ENCODE measurements at regions of chr12 and their contacts with region 1.

Region 1: GRCh38 chr12:51217968-51218606 is at the start of gene POU6F1:
- DNase-seq: peak; percentile 72
- H3K4me3 Mint-ChIP-seq: peak within 1 kb of the TSS; percentile 79
- H3K27ac Mint-ChIP-seq: peak within 1 kb of the TSS; percentile 65
- H3K4me1 Mint-ChIP-seq: peaks cover 16% of the 10 kb centered on the region
- H3K27me3 Mint-ChIP-seq: no peaks in the 10 kb centered on the region
- total RNA-seq, gene POU6F1: 4.1 to 4.8 TPM

Region 2: GRCh38 chr12:51047655-51048540 is 170.2 kb before region 1 on chr12 and contains the start of gene LETMD1:
- CTCF ChIA-PET with region 1: interaction called, 4 read pairs
- POLR2A ChIA-PET with region 1: interaction called, 13 read pairs
- DNase-seq: peak; percentile 93
- H3K4me3 Mint-ChIP-seq: peak within 1 kb of the TSS; percentile 94
- H3K27ac Mint-ChIP-seq: peak within 1 kb of the TSS; percentile 92
- H3K4me1 Mint-ChIP-seq: peaks cover 37% of the 10 kb centered on the region
- H3K27me3 Mint-ChIP-seq: no peaks in the 10 kb centered on the region
- total RNA-seq, gene LETMD1: 92.1 to 93.9 TPM

Region 3: GRCh38 chr12:51083126-51083833 is 134.8 kb before region 1 on chr12 and contains the start of gene CSRNP2:
- CTCF ChIA-PET with region 1: interaction called, 5 read pairs
- POLR2A ChIA-PET with region 1: interaction called, 13 read pairs
- DNase-seq: peak; percentile 96
- H3K4me3 Mint-ChIP-seq: peak within 1 kb of the TSS; percentile 92
- H3K27ac Mint-ChIP-seq: peak within 1 kb of the TSS; percentile 71
- H3K4me1 Mint-ChIP-seq: peaks cover 42% of the 10 kb centered on the region
- H3K27me3 Mint-ChIP-seq: no peaks in the 10 kb centered on the region
- total RNA-seq, gene CSRNP2: 14.7 to 16.3 TPM

Region 4: GRCh38 chr12:51192284-51192671 is 25.8 kb before region 1 on chr12:
- CTCF ChIA-PET with region 1: no interaction called
- POLR2A ChIA-PET with region 1: no interaction called
- DNase-seq: no peak
- H3K4me3 Mint-ChIP-seq: no peak overlapping the region
- H3K27ac Mint-ChIP-seq: no peak overlapping the region
- H3K4me1 Mint-ChIP-seq: no peaks in the 10 kb centered on the region
- H3K27me3 Mint-ChIP-seq: no peaks in the 10 kb centered on the region

Region 5: GRCh38 chr12:51229116-51229809 is 11.2 kb after region 1 on chr12:
- CTCF ChIA-PET with region 1: interaction called, 18 read pairs
- POLR2A ChIA-PET with region 1: interaction called, 6 read pairs
- DNase-seq: no peak
- H3K4me3 Mint-ChIP-seq: no peak overlapping the region
- H3K27ac Mint-ChIP-seq: no peak overlapping the region
- H3K4me1 Mint-ChIP-seq: no peaks in the 10 kb centered on the region
- H3K27me3 Mint-ChIP-seq: peaks cover 2% of the 10 kb centered on the region

Region 6: GRCh38 chr12:51238510-51239334 is 20.6 kb after region 1 on chr12 and contains the start of gene DAZAP2:
- CTCF ChIA-PET with region 1: interaction called, 17 read pairs
- POLR2A ChIA-PET with region 1: interaction called, 68 read pairs
- DNase-seq: peak; percentile 97
- H3K4me3 Mint-ChIP-seq: peak within 1 kb of the TSS; percentile 93
- H3K27ac Mint-ChIP-seq: peak within 1 kb of the TSS; percentile 98
- H3K4me1 Mint-ChIP-seq: peaks cover 39% of the 10 kb centered on the region
- H3K27me3 Mint-ChIP-seq: peaks cover 4% of the 10 kb centered on the region
- total RNA-seq, gene DAZAP2: 247 TPM

Region 7: DNA sequence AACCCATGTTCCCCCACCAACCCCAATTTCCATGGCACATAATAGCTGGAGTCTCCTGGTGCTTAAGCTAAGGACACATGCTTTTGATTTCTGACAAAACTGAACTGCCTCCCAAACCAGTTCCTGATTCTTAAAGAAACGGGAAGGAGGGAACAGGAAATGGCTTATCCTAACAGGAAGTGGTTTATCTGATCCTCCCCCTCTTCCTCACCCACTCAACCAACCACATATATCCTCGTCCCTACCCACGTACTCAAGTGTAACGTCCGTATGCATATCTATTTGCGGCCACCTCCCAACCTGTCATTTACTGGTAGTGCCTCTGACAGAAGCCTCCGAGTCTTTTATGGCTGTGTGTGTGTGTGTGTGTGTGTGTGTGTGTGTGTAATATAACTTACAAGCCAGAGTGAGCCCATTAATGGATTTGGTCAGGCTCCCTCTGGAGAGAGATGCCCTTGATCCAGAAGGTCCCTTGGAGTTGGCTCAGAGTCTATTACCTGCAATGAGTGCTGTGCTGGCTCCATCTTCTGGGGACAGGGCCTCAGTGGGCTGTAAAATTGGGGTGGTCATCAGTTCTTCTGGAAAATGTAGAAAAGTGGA is 28.3 kb after region 1 on chr12:
- CTCF ChIA-PET with region 1: interaction called, 3 read pairs
- POLR2A ChIA-PET with region 1: interaction called, 68 read pairs
- DNase-seq: peak; percentile 57
- H3K4me3 Mint-ChIP-seq: peak overlapping the region; percentile 1
- H3K27ac Mint-ChIP-seq: peak overlapping the region; percentile 77
- H3K4me1 Mint-ChIP-seq: peaks cover 48% of the 10 kb centered on the region
- H3K27me3 Mint-ChIP-seq: no peaks in the 10 kb centered on the region

Region 8: GRCh38 chr12:51326762-51327439 is 108.8 kb after region 1 on chr12:
- CTCF ChIA-PET with region 1: no interaction called
- POLR2A ChIA-PET with region 1: interaction called, 11 read pairs
- DNase-seq: peak; percentile 24
- H3K4me3 Mint-ChIP-seq: peak overlapping the region; percentile 45
- H3K27ac Mint-ChIP-seq: peak overlapping the region; percentile 97
- H3K4me1 Mint-ChIP-seq: peaks cover 70% of the 10 kb centered on the region
- H3K27me3 Mint-ChIP-seq: peaks cover 2% of the 10 kb centered on the region

Measured in activated CD4-positive, alpha-beta memory T cell treated with anti-CD3 and anti-CD28 coated beads, Interleukin-2, amount 10 ng/mL, durations not matched to agents 7 days and 5 days (primary cell).